OCI-LY7 (cell line): ENCODE measurements at regions of chrX and their contacts with region 1.

Region 1: DNA sequence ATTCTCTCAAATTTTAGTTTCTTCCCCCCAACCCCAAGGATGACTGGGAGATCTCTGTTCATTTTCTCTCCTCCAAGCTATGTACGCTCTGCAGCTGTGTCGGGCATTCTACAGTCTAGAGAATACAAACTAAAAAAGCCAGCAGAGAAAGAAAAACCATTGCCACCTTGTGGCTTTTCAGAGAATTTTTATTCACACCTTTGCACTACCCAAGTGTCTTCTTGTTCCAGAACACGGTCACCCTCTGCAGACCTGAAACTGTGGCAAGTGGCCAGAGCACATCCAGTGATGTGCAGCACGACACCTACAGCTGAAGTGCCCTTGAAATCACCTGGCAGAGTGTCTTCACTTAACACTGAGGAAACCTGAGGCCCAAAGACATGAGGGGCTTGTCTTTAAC is 68.6 kb downstream of the CHST7 start:
- DNase-seq: peak; percentile 24
- H3K4me3 ChIP-seq: no peak overlapping the region
- H3K27ac ChIP-seq: no peak overlapping the region
- H3K4me1 ChIP-seq: no peaks in the 10 kb centered on the region
- CTCF ChIP-seq: peak; percentile 59

Region 2: GRCh38 chrX:46573331-46573891 is 68.7 kb before region 1 on chrX and contains the start of gene CHST7:
- CTCF ChIA-PET with region 1: no interaction called
- POLR2A ChIA-PET with region 1: no interaction called
- intact Hi-C with region 1: loop called (anchors 5 kb)
- DNase-seq: peak; percentile 77
- H3K4me3 ChIP-seq: peak within 1 kb of the TSS; percentile 74
- H3K27ac ChIP-seq: peak within 1 kb of the TSS; percentile 80
- H3K4me1 ChIP-seq: peaks cover 33% of the 10 kb centered on the region
- CTCF ChIP-seq: peak; percentile 70
- total RNA-seq, gene CHST7: 5.3 and 7.5 TPM in 2 replicates

Region 3: GRCh38 chrX:46611658-46612362 is 30.3 kb before region 1 on chrX:
- CTCF ChIA-PET with region 1: no interaction called
- POLR2A ChIA-PET with region 1: no interaction called
- intact Hi-C with region 1: no loop called
- DNase-seq: no peak
- H3K4me3 ChIP-seq: no peak overlapping the region
- H3K27ac ChIP-seq: no peak overlapping the region
- H3K4me1 ChIP-seq: no peaks in the 10 kb centered on the region
- CTCF ChIP-seq: no peak

Region 4: DNA sequence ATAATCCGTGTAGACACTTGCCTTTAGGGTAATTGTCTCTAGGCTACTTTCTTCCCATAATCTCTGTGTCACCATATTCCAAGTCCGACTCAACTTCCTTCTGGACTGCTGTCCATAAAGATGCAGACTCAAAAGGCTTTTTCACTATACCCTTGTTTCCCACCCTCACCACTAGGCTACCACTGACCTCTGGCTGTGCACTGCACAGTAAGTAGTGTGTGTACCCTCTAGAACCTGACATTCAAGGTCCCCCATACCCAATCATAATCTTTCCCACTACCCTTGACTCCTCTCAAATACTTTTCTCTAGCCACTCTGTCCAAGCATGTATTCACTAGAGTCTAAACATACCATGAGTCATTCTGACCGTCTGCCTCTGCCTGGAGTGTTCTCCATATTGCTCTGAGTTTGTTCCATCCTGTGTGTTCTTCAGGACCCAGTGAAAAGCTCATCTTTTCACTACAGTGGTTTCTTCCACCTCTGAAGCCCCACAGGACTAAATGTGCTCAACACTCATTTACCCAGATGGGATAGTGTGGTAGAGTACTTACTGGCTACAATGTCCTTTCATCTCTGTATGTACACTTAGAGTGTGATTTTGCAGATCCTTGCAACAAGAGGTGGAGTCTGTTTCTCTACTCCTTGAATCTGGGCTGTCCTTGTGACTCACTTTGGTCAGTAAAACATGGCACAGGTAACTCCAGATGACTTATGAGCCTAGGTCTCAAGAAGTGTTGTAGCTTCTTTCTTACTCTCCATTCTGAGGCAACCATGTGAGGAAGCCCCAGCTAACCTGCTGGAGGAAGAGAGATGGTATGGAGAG is 287.5 kb after region 1 on chrX:
- CTCF ChIA-PET with region 1: no interaction called
- POLR2A ChIA-PET with region 1: no interaction called
- intact Hi-C with region 1: no loop called
- DNase-seq: no peak
- H3K4me3 ChIP-seq: no peak overlapping the region
- H3K27ac ChIP-seq: no peak overlapping the region
- H3K4me1 ChIP-seq: no peaks in the 10 kb centered on the region
- CTCF ChIP-seq: no peak